CD4-positive, alpha-beta T cell (primary cell): ENCODE measurements at regions of chr18 and their contacts with region 1.

Region 1: DNA sequence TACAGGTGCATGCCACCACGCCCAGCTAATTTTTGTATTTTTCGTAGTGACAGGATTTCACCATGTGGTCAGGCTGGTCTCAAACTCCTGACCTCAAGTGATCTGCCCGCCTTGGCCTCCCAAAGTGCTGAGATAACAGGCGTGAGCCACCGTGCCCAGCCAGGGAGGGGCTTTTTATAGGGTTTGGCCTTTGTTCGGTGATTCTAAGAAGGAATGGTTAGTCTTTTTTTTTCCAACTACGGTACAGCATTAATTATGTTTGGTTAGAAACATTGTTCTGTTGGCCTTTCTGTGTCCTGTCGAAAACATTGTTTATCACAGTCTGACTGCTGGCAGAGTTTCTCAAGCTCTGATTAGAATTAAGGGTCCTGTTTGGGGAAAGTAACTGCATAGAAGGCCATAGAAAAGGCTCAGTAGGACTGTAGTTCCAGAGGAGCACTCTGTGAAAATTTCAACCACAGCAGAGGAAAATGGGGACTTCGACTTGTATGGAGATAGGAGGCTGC is 19.3 kb upstream of the SMCHD1 start:
- DNase-seq: no peak
- ATAC-seq: peak; percentile 46
- H3K4me3 ChIP-seq: peak overlapping the region; percentile 44
- H3K4me3 Mint-ChIP-seq: peak overlapping the region; percentile 80
- H3K27ac ChIP-seq: peak overlapping the region; percentile 91 to 97
- H3K27ac Mint-ChIP-seq: no peak overlapping the region
- H3K4me1 ChIP-seq: peaks cover 79% of the 10 kb centered on the region
- H3K4me1 Mint-ChIP-seq: peaks cover 99% of the 10 kb centered on the region
- H3K27me3 ChIP-seq: no peaks in the 10 kb centered on the region
- H3K27me3 Mint-ChIP-seq: no peaks in the 10 kb centered on the region
- CTCF ChIP-seq: no peak

Region 2: GRCh38 chr18:2083691-2084090 is 552.5 kb before region 1 on chr18:
- CTCF ChIA-PET with region 1: no interaction called
- POLR2A ChIA-PET with region 1: no interaction called
- intact Hi-C with region 1: no loop called
- DNase-seq: no peak
- ATAC-seq: no peak
- H3K4me3 ChIP-seq: no peak overlapping the region
- H3K4me3 Mint-ChIP-seq: no peak overlapping the region
- H3K27ac ChIP-seq: no peak overlapping the region
- H3K27ac Mint-ChIP-seq: no peak overlapping the region
- H3K4me1 ChIP-seq: no peaks in the 10 kb centered on the region
- H3K4me1 Mint-ChIP-seq: no peaks in the 10 kb centered on the region
- H3K27me3 ChIP-seq: no peaks in the 10 kb centered on the region
- H3K27me3 Mint-ChIP-seq: no peaks in the 10 kb centered on the region
- CTCF ChIP-seq: no peak

Region 3: GRCh38 chr18:2547477-2548087 is 88.6 kb before region 1 on chr18:
- CTCF ChIA-PET with region 1: no interaction called
- POLR2A ChIA-PET with region 1: interaction called, 23 read pairs
- intact Hi-C with region 1: no loop called
- DNase-seq: peak in 3 of 14 experiments; percentile 50 to 67 (median 66)
- ATAC-seq: peak; percentile 62
- H3K4me3 ChIP-seq: no peak overlapping the region
- H3K4me3 Mint-ChIP-seq: no peak overlapping the region
- H3K27ac ChIP-seq: no peak overlapping the region
- H3K27ac Mint-ChIP-seq: no peak overlapping the region
- H3K4me1 ChIP-seq: no peaks in the 10 kb centered on the region
- H3K4me1 Mint-ChIP-seq: peaks cover 18% of the 10 kb centered on the region
- H3K27me3 ChIP-seq: no peaks in the 10 kb centered on the region
- H3K27me3 Mint-ChIP-seq: no peaks in the 10 kb centered on the region
- CTCF ChIP-seq: peak; percentile 88

Region 4: DNA sequence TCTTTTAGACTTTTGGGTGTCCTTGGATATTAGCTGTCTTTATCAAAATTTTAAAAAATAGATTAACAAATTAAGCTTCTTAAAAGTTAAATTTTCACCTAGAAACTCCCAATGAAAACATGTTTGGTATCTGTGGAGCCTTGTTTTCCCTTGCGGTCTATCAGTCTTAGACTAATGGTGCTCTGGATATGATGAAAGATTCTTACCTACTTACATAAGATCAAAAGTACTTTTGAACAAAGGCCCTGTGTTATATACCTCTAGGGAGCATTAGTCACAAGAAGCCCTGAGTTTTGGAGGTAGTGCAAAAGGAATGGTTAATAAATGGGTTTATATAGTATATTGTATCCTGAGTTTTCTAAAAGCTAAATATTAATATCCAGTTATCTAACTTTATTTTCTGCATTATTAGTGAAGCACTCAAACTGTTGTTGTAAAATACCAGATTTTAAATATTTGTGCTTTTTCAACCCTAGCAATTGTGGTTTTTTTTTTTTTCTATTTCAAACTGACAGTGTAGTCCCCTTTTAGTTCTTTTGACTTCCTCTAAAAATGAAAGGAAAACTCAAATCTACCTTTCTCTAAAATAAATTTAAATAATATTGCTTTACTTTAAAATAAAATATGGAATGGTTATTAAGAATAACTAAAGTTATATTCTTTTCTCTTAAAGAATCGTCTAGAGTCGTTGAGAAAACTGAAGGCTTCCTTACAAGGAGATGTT is 46.7 kb before region 1 on chr18:
- CTCF ChIA-PET with region 1: no interaction called
- POLR2A ChIA-PET with region 1: interaction called, 87 read pairs
- intact Hi-C with region 1: loop called in 1 of 2 experiments (anchors 5 kb)
- DNase-seq: peak in 4 of 14 experiments; percentile 7 to 54 (median 50)
- ATAC-seq: peak; percentile 86
- H3K4me3 ChIP-seq: peak overlapping the region; percentile 41
- H3K4me3 Mint-ChIP-seq: peak overlapping the region; percentile 78
- H3K27ac ChIP-seq: peak overlapping the region; percentile 47 to 84
- H3K27ac Mint-ChIP-seq: peak overlapping the region; percentile 89
- H3K4me1 ChIP-seq: peaks cover 15% of the 10 kb centered on the region
- H3K4me1 Mint-ChIP-seq: peaks cover 52% of the 10 kb centered on the region
- H3K27me3 ChIP-seq: no peaks in the 10 kb centered on the region
- H3K27me3 Mint-ChIP-seq: no peaks in the 10 kb centered on the region
- CTCF ChIP-seq: no peak

Region 5: DNA sequence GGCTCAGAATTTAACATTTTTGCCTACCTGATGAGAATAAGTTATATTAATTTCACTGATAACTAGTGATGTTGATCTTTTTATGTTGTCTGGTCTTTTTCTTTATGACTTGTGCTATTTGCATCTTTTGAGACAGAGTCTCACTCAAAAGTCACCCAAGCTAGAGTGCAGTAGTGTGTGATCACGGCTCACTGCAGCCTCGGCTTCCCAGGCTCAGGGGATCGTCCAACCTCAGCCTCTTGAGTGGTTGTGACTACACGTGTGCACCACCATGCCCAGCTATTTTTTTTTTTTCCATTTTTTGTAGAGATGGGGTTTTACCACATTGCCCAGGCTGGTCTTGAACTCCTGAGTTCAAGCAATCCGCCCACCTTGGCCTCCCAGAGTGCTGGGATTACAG is 26.8 kb after region 1 on chr18:
- CTCF ChIA-PET with region 1: interaction called, 32 read pairs
- POLR2A ChIA-PET with region 1: interaction called, 698 read pairs
- intact Hi-C with region 1: no loop called
- DNase-seq: no peak
- ATAC-seq: peak; percentile 21
- H3K4me3 ChIP-seq: peak overlapping the region; percentile 8
- H3K4me3 Mint-ChIP-seq: peak overlapping the region; percentile 49
- H3K27ac ChIP-seq: no peak overlapping the region
- H3K27ac Mint-ChIP-seq: peak overlapping the region; percentile 1
- H3K4me1 ChIP-seq: peaks cover 32% of the 10 kb centered on the region
- H3K4me1 Mint-ChIP-seq: peaks cover 74% of the 10 kb centered on the region
- H3K27me3 ChIP-seq: no peaks in the 10 kb centered on the region
- H3K27me3 Mint-ChIP-seq: no peaks in the 10 kb centered on the region
- CTCF ChIP-seq: no peak

Region 6: GRCh38 chr18:2680216-2680792 is 44.1 kb after region 1 on chr18:
- CTCF ChIA-PET with region 1: interaction called, 3 read pairs
- POLR2A ChIA-PET with region 1: interaction called, 18 read pairs
- intact Hi-C with region 1: loop called in 1 of 2 experiments (anchors 2 kb)
- DNase-seq: no peak
- ATAC-seq: peak; percentile 19
- H3K4me3 ChIP-seq: no peak overlapping the region
- H3K4me3 Mint-ChIP-seq: peak overlapping the region; percentile 2
- H3K27ac ChIP-seq: peak overlapping the region in 1 of 2 donors; percentile 13
- H3K27ac Mint-ChIP-seq: peak overlapping the region; percentile 40
- H3K4me1 ChIP-seq: peaks cover 15% of the 10 kb centered on the region
- H3K4me1 Mint-ChIP-seq: peaks cover 81% of the 10 kb centered on the region
- H3K27me3 ChIP-seq: no peaks in the 10 kb centered on the region
- H3K27me3 Mint-ChIP-seq: no peaks in the 10 kb centered on the region
- CTCF ChIP-seq: no peak

Region 7: GRCh38 chr18:2741651-2742050 is 105.5 kb after region 1 on chr18:
- CTCF ChIA-PET with region 1: no interaction called
- POLR2A ChIA-PET with region 1: no interaction called
- intact Hi-C with region 1: no loop called
- DNase-seq: no peak
- ATAC-seq: no peak
- H3K4me3 ChIP-seq: no peak overlapping the region
- H3K4me3 Mint-ChIP-seq: no peak overlapping the region
- H3K27ac ChIP-seq: no peak overlapping the region
- H3K27ac Mint-ChIP-seq: peak overlapping the region; percentile 2
- H3K4me1 ChIP-seq: no peaks in the 10 kb centered on the region
- H3K4me1 Mint-ChIP-seq: peaks cover 32% of the 10 kb centered on the region
- H3K27me3 ChIP-seq: no peaks in the 10 kb centered on the region
- H3K27me3 Mint-ChIP-seq: no peaks in the 10 kb centered on the region
- CTCF ChIP-seq: no peak

Region 8: GRCh38 chr18:2787225-2787624 is 151.0 kb after region 1 on chr18:
- CTCF ChIA-PET with region 1: no interaction called
- POLR2A ChIA-PET with region 1: no interaction called
- intact Hi-C with region 1: no loop called
- DNase-seq: no peak
- ATAC-seq: no peak
- H3K4me3 ChIP-seq: no peak overlapping the region
- H3K4me3 Mint-ChIP-seq: no peak overlapping the region
- H3K27ac ChIP-seq: no peak overlapping the region
- H3K27ac Mint-ChIP-seq: peak overlapping the region; percentile 28
- H3K4me1 ChIP-seq: no peaks in the 10 kb centered on the region
- H3K4me1 Mint-ChIP-seq: peaks cover 5% of the 10 kb centered on the region
- H3K27me3 ChIP-seq: no peaks in the 10 kb centered on the region
- H3K27me3 Mint-ChIP-seq: no peaks in the 10 kb centered on the region
- CTCF ChIP-seq: no peak

Region 9: DNA sequence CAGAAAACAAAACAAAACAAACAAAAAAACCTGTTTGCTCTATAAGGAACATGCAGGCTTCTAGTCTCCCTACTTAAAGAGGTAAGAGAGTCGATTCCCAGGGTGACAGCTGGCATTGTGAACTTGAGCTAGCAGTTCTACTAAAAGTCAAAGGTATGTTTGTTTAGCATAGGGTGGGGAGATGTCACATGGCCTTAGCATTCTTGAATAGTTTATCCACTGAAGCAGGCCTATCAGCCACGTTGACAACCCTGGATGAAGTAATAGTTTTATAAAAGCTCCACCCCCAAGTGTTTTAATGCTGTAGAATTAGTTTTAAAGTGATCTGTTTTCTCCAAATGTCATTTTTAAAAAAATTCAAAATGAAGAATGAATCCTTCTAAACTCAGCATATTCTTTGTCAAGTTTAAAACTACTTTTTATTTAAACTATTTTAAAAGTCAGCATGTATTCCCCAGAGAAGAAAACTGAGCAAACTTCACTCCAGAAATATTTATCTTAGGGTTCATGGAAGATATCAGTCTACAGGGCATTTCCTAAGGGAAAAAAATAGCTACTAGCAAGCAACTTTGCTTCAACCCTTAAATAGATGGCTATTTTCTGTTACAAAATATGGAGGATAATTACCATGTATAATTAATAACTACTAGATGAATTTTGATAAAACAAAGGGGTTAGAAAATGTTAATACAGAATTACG is 581.9 kb after region 1 on chr18:
- CTCF ChIA-PET with region 1: no interaction called
- POLR2A ChIA-PET with region 1: no interaction called
- intact Hi-C with region 1: no loop called
- DNase-seq: no peak
- ATAC-seq: no peak
- H3K4me3 ChIP-seq: no peak overlapping the region
- H3K4me3 Mint-ChIP-seq: no peak overlapping the region
- H3K27ac ChIP-seq: no peak overlapping the region
- H3K27ac Mint-ChIP-seq: no peak overlapping the region
- H3K4me1 ChIP-seq: no peaks in the 10 kb centered on the region
- H3K4me1 Mint-ChIP-seq: peaks cover 8% of the 10 kb centered on the region
- H3K27me3 ChIP-seq: no peaks in the 10 kb centered on the region
- H3K27me3 Mint-ChIP-seq: no peaks in the 10 kb centered on the region
- CTCF ChIP-seq: no peak